ENCODE measurements at regions of chr10 and their contacts with region 1.

Region 1: GRCh38 chr10:87504640-87505365 is at the start of gene MINPP1:
- DNase-seq: peak; percentile 94
- ATAC-seq: peak; percentile 92
- H3K4me3 Mint-ChIP-seq: peak within 1 kb of the TSS; percentile 92
- H3K27ac Mint-ChIP-seq: peak within 1 kb of the TSS; percentile 94
- H3K4me1 Mint-ChIP-seq: peaks cover 40% of the 10 kb centered on the region
- H3K27me3 Mint-ChIP-seq: no peaks in the 10 kb centered on the region
- total RNA-seq, gene MINPP1: 8.3 TPM

Region 2: GRCh38 chr10:86755740-86756510 is 748.9 kb before region 1 on chr10:
- CTCF ChIA-PET with region 1: no interaction called
- POLR2A ChIA-PET with region 1: no interaction called
- intact Hi-C with region 1: loop called in 1 of 2 experiments (anchors 5 kb)
- DNase-seq: peak; percentile 93
- ATAC-seq: peak; percentile 96
- H3K4me3 Mint-ChIP-seq: peak overlapping the region; percentile 85
- H3K27ac Mint-ChIP-seq: peak overlapping the region; percentile 72
- H3K4me1 Mint-ChIP-seq: peaks cover 33% of the 10 kb centered on the region
- H3K27me3 Mint-ChIP-seq: peaks cover 26% of the 10 kb centered on the region

Region 3: GRCh38 chr10:87038786-87039185 is 466.0 kb before region 1 on chr10:
- CTCF ChIA-PET with region 1: interaction called, 3 read pairs
- POLR2A ChIA-PET with region 1: interaction called, 10 read pairs
- intact Hi-C with region 1: no loop called
- DNase-seq: no peak
- ATAC-seq: no peak
- H3K4me3 Mint-ChIP-seq: no peak overlapping the region
- H3K27ac Mint-ChIP-seq: no peak overlapping the region
- H3K4me1 Mint-ChIP-seq: no peaks in the 10 kb centered on the region
- H3K27me3 Mint-ChIP-seq: no peaks in the 10 kb centered on the region

Region 4: DNA sequence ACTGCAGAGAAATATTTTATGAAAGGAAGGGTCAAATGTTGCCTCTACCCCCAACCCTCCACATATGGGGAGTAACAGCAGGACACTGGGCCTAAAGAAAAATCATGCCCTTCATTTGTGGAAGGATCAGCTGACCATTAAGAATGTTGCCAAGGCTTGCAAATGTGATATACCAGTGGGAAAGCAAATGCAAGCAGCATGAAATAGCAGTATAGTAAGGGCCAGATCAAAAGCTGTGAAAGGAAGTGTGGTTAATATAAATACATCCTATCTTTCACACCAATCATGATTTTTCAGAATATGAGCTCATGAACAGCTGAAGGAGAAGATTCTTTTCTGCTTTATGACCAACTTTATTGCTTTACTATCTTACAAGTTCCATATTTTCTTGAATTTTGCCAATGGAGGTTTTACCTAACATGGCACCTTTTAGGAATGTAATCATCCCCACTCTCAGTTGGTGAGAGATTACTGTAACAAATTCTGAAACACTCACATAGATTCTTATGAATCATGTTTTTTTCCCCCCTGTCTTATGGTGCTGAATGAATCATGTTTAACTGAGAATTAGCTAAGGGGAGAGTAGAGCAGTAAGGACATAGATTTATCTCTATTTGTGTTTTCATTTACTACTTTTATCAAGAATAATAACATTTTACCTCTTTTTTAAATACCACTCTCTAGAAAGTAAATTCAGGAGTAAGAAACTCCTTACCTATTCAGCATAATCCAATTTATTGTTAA is 325.4 kb after region 1 on chr10:
- CTCF ChIA-PET with region 1: no interaction called
- POLR2A ChIA-PET with region 1: no interaction called
- intact Hi-C with region 1: no loop called
- DNase-seq: no peak
- ATAC-seq: peak; percentile 93
- H3K4me3 Mint-ChIP-seq: no peak overlapping the region
- H3K27ac Mint-ChIP-seq: no peak overlapping the region
- H3K4me1 Mint-ChIP-seq: peaks cover 42% of the 10 kb centered on the region
- H3K27me3 Mint-ChIP-seq: no peaks in the 10 kb centered on the region